ENCODE measurements at regions of chr10 and their contacts with region 1.

Region 1: GRCh38 chr10:119725828-119726675 is at the start of gene INPP5F:
- DNase-seq: peak; percentile 97
- ATAC-seq: peak; percentile 96
- H3K4me3 ChIP-seq: peak within 1 kb of the TSS; percentile 71 to 76
- H3K27ac ChIP-seq: peak within 1 kb of the TSS; percentile 66
- H3K4me1 ChIP-seq: peaks cover 15 to 23% of the 10 kb centered on the region in 2 experiments
- H3K27me3 ChIP-seq: no peaks in the 10 kb centered on the region
- CTCF ChIP-seq: peak in 2 of 3 experiments; percentile 14 to 15; a peak in 1 of 6 replicates
- POLR2A ChIP-seq: no peak
- RAD21 ChIP-seq: no peak
- total RNA-seq, gene INPP5F: 21.6 TPM

Region 2: GRCh38 chr10:119596537-119597404 is 129.3 kb before region 1 on chr10 and contains the start of gene TIAL1:
- CTCF ChIA-PET with region 1: no interaction called
- POLR2A ChIA-PET with region 1: no interaction called
- RAD21 ChIA-PET with region 1: no interaction called
- intact Hi-C with region 1: loop called (anchors 5 kb)
- DNase-seq: peak; percentile 100
- ATAC-seq: peak; percentile 88
- H3K4me3 ChIP-seq: peak within 1 kb of the TSS; percentile 85 to 88
- H3K27ac ChIP-seq: peak within 1 kb of the TSS; percentile 97
- H3K4me1 ChIP-seq: peaks cover 13 to 23% of the 10 kb centered on the region in 2 experiments
- H3K27me3 ChIP-seq: no peaks in the 10 kb centered on the region
- CTCF ChIP-seq: no peak
- POLR2A ChIP-seq: peak; percentile 97
- RAD21 ChIP-seq: no peak
- total RNA-seq, gene TIAL1: 220 TPM

Region 3: DNA sequence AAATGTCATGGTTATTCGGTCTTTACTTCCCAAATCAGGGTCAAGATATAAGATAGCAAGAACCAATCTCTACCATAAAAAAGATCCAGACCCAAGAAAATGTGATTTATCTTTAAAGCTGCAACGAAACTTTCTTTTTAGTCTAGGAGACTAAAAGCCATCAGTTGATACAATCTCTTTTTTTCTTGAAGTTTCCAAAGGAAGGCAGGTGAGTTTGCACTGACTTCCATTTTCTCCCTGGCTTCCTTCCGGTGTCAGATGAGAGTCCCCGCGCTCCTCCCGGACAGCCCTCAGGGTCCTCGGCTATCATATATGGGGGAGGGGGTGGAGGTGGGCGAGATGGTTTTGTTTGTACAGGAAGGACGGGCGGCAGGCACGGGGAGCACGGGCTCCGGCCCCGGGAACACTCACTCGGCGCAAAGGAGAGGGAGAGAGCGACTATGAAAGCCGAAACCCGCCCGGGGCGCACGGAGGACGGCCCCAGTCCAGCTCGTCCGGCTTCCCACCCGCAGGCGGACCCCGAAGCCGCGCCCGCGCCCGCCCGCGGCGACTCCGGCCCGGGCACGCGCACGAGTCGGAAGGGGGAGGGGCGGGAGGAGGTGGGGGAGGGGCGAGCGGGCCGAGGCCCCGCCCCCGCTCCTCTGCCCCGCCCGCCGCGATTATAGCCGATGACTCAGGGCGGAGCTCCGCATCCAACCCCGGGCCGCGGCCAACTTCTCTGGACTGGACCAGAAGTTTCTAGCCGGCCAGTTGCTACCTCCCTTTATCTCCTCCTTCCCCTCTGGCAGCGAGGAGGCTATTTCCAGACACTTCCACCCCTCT is 75.1 kb before region 1 on chr10 and contains the start of gene BAG3:
- CTCF ChIA-PET with region 1: no interaction called
- POLR2A ChIA-PET with region 1: interaction called, 9 read pairs
- RAD21 ChIA-PET with region 1: no interaction called
- intact Hi-C with region 1: loop called (anchors 2 kb)
- DNase-seq: peak; percentile 80
- ATAC-seq: peak; percentile 88
- H3K4me3 ChIP-seq: peak within 1 kb of the TSS; percentile 83 to 90
- H3K27ac ChIP-seq: peak within 1 kb of the TSS; percentile 94
- H3K4me1 ChIP-seq: peaks cover 13 to 41% of the 10 kb centered on the region in 2 experiments
- H3K27me3 ChIP-seq: no peaks in the 10 kb centered on the region
- CTCF ChIP-seq: no peak
- POLR2A ChIP-seq: peak; percentile 98
- RAD21 ChIP-seq: no peak
- total RNA-seq, gene BAG3: 57.0 TPM

Region 4: DNA sequence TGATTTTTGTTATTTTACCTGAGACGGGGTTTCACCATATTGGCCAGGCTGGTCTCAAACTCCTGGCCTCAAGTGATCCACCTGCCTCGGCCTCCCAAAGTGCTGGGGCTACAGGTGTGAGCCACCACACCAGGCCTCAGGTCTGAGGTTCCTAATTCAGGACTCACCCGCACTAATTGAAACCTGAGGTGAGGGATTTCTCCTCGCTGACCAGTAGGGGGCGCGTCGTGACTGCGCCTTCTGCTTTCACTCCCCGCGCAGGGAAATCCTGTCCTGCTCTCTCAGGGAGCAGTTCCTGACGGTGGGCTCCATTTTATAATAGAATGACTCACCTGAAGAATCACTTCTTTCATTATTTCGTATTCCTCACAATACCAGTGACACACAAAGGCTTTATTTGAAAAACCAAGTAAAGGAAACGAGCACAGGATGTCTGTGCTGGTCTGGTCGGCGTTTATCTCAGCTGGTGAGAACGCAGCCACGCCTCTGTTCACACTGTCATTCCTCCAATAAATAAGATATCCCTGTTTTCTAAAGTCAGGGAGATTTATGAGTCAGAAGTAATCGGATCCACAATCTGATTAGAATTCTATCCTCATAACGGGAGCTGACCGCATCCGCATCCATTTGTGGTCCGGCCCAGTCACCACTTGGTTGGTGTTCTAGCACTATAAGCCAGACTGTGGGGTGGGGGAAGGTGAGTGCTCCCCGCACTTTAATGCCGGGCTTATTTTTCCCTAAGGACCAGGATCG is 39.4 kb before region 1 on chr10:
- CTCF ChIA-PET with region 1: no interaction called
- POLR2A ChIA-PET with region 1: no interaction called
- RAD21 ChIA-PET with region 1: interaction called in 1 of 2 experiments, 4 read pairs
- intact Hi-C with region 1: loop called (anchors 5 kb)
- DNase-seq: peak; percentile 75
- ATAC-seq: peak; percentile 88
- H3K4me3 ChIP-seq: no peak overlapping the region
- H3K27ac ChIP-seq: no peak overlapping the region
- H3K4me1 ChIP-seq: peaks cover 11 to 24% of the 10 kb centered on the region in 2 experiments
- H3K27me3 ChIP-seq: no peaks in the 10 kb centered on the region
- CTCF ChIP-seq: peak; percentile 90 to 99 (median 90)
- POLR2A ChIP-seq: no peak
- RAD21 ChIP-seq: peak; percentile 99

Region 5: GRCh38 chr10:119737827-119738226 is 11.8 kb after region 1 on chr10:
- CTCF ChIA-PET with region 1: interaction called, 5 read pairs
- POLR2A ChIA-PET with region 1: interaction called, 12 read pairs
- RAD21 ChIA-PET with region 1: interaction called in 1 of 2 experiments, 5 read pairs
- intact Hi-C with region 1: no loop called
- DNase-seq: peak; percentile 86
- ATAC-seq: peak; percentile 96
- H3K4me3 ChIP-seq: peak overlapping the region in 1 of 2 experiments; percentile 34; a peak in 2 of 4 replicates
- H3K27ac ChIP-seq: peak overlapping the region; percentile 53; the same call in 1 of the 2 replicates
- H3K4me1 ChIP-seq: peaks cover 40 to 61% of the 10 kb centered on the region in 2 experiments
- H3K27me3 ChIP-seq: no peaks in the 10 kb centered on the region
- CTCF ChIP-seq: no peak
- POLR2A ChIP-seq: no peak
- RAD21 ChIP-seq: 0 out of 2 replicates have a peak, but pooled peaks have one; percentile 11

Region 6: DNA sequence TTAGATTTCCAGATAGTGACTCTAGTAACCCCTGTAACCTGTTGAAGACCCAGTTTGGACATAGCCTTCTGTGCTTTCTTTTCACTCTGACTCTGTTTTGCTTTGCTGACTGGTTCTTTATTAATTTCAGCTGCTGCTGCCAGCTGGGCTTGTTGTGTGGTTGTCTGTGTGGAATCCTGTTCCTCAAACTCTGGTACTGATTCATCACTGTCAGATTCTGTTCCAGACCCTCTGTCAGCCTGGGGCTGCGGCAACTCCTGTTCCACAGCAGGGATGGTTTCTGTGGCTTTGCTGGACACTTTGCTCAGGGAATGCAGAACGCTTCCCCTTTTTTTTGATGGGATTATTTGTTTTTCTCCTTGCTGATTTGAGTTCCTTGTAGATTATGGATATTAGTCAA is 271.4 kb after region 1 on chr10:
- CTCF ChIA-PET with region 1: no interaction called
- POLR2A ChIA-PET with region 1: no interaction called
- RAD21 ChIA-PET with region 1: no interaction called
- intact Hi-C with region 1: no loop called
- DNase-seq: no peak
- ATAC-seq: no peak
- H3K4me3 ChIP-seq: no peak overlapping the region
- H3K27ac ChIP-seq: no peak overlapping the region
- H3K4me1 ChIP-seq: no peaks in the 10 kb centered on the region
- H3K27me3 ChIP-seq: peaks cover 11% of the 10 kb centered on the region
- CTCF ChIP-seq: no peak
- POLR2A ChIP-seq: no peak
- RAD21 ChIP-seq: no peak

Region 7: DNA sequence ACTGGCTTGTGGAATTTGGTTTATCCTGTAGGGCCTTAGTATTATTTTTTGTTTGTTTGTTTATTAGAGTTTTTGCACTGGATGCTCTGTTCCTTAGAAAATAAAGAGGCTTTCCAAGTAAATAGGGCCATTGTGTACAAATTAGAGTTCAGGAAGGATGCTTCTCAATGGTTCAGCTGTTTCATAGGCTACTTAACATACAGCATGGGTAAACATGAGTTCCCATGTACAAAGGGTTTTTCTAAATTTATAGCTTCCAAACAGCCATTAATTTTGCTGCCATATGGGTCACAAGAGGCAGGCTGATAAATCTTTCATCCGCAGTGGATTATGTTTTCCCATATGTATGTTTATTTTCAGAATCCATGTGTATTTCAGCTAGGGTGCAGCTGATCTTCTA is 1003.5 kb after region 1 on chr10:
- CTCF ChIA-PET with region 1: no interaction called
- POLR2A ChIA-PET with region 1: no interaction called
- RAD21 ChIA-PET with region 1: no interaction called
- intact Hi-C with region 1: no loop called
- DNase-seq: no peak
- ATAC-seq: no peak
- H3K4me3 ChIP-seq: no peak overlapping the region
- H3K27ac ChIP-seq: no peak overlapping the region
- H3K4me1 ChIP-seq: peaks cover 0 to 9% of the 10 kb centered on the region in 2 experiments; a peak in 1 of 4 replicates
- H3K27me3 ChIP-seq: no peaks in the 10 kb centered on the region
- CTCF ChIP-seq: no peak
- POLR2A ChIP-seq: no peak
- RAD21 ChIP-seq: no peak